ENCODE measurements at regions of chr2 and their contacts with region 1.

Region 1: DNA sequence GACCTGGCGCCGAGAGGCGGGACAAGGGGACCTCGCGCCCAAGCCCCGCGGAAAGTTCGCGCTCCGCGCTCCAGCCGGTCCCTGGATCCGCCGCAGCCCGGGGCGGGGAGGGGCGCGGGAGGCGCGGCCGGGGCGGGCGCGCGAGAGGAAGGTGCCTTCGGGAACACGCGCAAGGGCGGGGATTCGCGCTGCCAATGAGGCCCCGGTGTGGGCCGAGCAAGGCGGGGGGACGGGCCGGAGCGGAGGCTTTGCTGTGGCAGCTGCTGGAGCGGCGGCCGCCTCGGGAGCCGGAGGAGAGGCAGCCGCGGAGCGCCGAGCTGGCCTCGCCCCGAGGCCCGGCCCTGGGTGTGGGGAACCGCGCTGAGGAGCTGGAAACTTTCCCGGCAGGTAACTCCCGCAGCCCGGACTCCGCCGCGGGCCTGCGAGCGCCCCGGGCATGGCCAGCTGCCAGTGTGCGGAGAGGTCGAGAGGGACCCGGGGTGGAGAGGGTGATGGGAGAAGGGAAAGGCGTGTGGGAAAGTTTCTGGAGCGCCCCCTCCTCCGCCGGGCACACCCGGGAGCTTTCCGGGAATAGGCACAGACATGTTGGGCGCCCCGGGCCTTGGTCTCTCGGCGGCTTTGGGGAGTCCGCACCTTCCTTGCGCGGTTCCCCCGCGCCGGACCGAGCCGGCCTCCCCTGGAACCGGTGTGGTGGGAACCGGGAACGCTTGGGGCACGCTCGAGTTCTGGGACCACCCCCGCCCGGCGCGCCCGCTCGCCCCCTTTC is at the start of gene TANC1:
- DNase-seq: peak; percentile 93
- H3K4me3 ChIP-seq: peak within 1 kb of the TSS; percentile 88 to 90 (median 90)
- H3K27ac ChIP-seq: peak within 1 kb of the TSS; percentile 83
- H3K4me1 ChIP-seq: peaks cover 44% of the 10 kb centered on the region
- H3K27me3 ChIP-seq: no peaks in the 10 kb centered on the region
- CTCF ChIP-seq: no peak
- total RNA-seq, gene TANC1: 46.6 to 51.5 TPM

Region 2: GRCh38 chr2:158893026-158893425 is 75.6 kb before region 1 on chr2:
- CTCF ChIA-PET with region 1: no interaction called
- dilution Hi-C with region 1: no loop called
- in situ Hi-C with region 1: no loop called
- intact Hi-C with region 1: loop called (anchors 5 kb)
- DNase-seq: peak; percentile 90
- H3K4me3 ChIP-seq: no peak overlapping the region
- H3K27ac ChIP-seq: peak overlapping the region; percentile 96
- H3K4me1 ChIP-seq: peaks cover 55% of the 10 kb centered on the region
- H3K27me3 ChIP-seq: no peaks in the 10 kb centered on the region
- CTCF ChIP-seq: no peak

Region 3: GRCh38 chr2:158990397-158991209 is 22.0 kb after region 1 on chr2:
- CTCF ChIA-PET with region 1: no interaction called
- dilution Hi-C with region 1: no loop called
- in situ Hi-C with region 1: no loop called
- intact Hi-C with region 1: loop called (anchors 1 kb)
- DNase-seq: peak; percentile 98
- H3K4me3 ChIP-seq: no peak overlapping the region
- H3K27ac ChIP-seq: peak overlapping the region; percentile 65
- H3K4me1 ChIP-seq: peaks cover 59% of the 10 kb centered on the region
- H3K27me3 ChIP-seq: no peaks in the 10 kb centered on the region
- CTCF ChIP-seq: no peak

Region 4: DNA sequence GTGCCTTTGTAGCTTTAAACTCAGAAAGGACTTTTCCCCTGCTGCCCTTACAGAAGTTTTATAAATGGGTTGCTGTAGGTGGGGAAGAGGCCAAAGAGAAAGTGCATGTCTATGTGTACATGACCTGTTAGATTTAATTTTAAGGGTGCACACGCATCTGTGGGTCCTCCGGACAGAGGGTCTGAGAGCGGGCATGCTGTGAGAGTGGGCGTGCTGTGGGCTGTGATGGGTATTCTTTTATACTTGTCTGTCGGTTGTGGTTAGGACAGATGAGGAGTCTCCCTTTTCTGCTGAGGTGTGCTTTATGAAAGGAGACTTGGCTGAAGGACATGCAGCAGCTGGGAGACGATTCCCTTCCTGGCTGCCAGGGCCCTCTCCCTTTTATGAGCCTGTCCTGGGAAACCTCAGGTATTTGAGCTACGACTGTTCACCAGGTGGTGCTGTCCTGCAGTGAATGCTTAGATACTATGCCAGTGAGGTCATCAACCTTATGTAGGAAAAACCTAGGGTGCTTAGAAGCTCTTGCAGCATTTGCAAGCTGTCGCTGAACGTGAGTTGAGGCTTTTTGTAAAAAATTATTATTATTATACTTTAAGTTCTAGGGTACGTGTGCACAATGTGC is 67.3 kb after region 1 on chr2:
- CTCF ChIA-PET with region 1: no interaction called
- dilution Hi-C with region 1: no loop called
- in situ Hi-C with region 1: no loop called
- intact Hi-C with region 1: loop called (anchors 1 kb)
- DNase-seq: peak; percentile 86
- H3K4me3 ChIP-seq: no peak overlapping the region
- H3K27ac ChIP-seq: no peak overlapping the region
- H3K4me1 ChIP-seq: peaks cover 9% of the 10 kb centered on the region
- H3K27me3 ChIP-seq: no peaks in the 10 kb centered on the region
- CTCF ChIP-seq: peak; percentile 56 to 76

Region 5: GRCh38 chr2:159118115-159118858 is 149.7 kb after region 1 on chr2:
- CTCF ChIA-PET with region 1: interaction called, 6 read pairs
- dilution Hi-C with region 1: no loop called
- in situ Hi-C with region 1: no loop called
- intact Hi-C with region 1: loop called (anchors 1 kb)
- DNase-seq: peak; percentile 71
- H3K4me3 ChIP-seq: no peak overlapping the region
- H3K27ac ChIP-seq: no peak overlapping the region
- H3K4me1 ChIP-seq: peaks cover 7% of the 10 kb centered on the region
- H3K27me3 ChIP-seq: no peaks in the 10 kb centered on the region
- CTCF ChIP-seq: peak; percentile 92 to 96

Region 6: DNA sequence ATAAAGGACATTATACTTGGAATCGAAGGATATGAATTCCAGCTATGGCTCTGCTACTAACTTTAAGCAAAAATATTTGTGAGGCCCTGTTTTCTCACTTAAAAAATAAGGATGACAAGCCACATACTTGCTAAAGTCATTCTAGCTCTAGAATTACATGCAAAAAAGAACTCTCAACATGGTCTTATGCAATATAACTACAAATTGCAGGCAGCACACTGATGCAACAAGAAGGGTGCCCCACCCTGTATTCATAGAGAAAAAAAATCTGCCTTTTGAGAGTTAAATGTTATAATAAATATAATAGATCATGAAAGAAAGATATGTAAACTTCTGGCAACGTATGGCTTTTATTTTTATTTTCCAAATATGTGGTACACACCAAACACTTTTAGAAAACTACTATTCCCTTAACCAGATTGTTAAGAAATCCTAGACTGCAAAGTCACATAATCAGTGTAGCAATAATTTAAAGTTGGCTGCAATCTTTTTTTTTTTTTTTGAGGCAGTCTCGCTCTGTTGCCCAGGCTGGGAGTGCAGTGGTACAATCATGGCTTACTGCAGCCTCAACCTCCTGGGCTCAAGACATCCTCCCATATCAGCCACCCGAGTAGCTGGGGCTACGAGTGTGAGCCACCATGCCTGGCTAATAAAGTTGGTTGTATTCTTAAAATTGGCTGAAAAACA is 358.1 kb after region 1 on chr2:
- CTCF ChIA-PET with region 1: no interaction called
- dilution Hi-C with region 1: no loop called
- in situ Hi-C with region 1: no loop called
- intact Hi-C with region 1: no loop called
- DNase-seq: peak; percentile 15
- H3K4me3 ChIP-seq: no peak overlapping the region
- H3K27ac ChIP-seq: peak overlapping the region; percentile 35
- H3K4me1 ChIP-seq: no peaks in the 10 kb centered on the region
- H3K27me3 ChIP-seq: no peaks in the 10 kb centered on the region
- CTCF ChIP-seq: no peak